Activated CD4-positive, alpha-beta memory T cell treated with anti-CD3 and anti-CD28 coated beads, Interleukin-2, amount 10 ng/mL, durations not matched to agents 7 days and 5 days (primary cell): ENCODE measurements at regions of chr5 and their contacts with region 1.

Region 1: GRCh38 chr5:78294248-78295034 is at the start of gene AP3B1:
- DNase-seq: peak; percentile 98
- H3K4me3 Mint-ChIP-seq: peak within 1 kb of the TSS; percentile 94
- H3K27ac Mint-ChIP-seq: peak within 1 kb of the TSS; percentile 96
- H3K4me1 Mint-ChIP-seq: peaks cover 38% of the 10 kb centered on the region
- H3K27me3 Mint-ChIP-seq: peaks cover 3% of the 10 kb centered on the region
- total RNA-seq, gene AP3B1: 40.3 to 42.7 TPM

Region 2: GRCh38 chr5:78283105-78283504 is 11.3 kb before region 1 on chr5:
- CTCF ChIA-PET with region 1: interaction called, 4 read pairs
- POLR2A ChIA-PET with region 1: interaction called, 18 read pairs
- DNase-seq: no peak
- H3K4me3 Mint-ChIP-seq: no peak overlapping the region
- H3K27ac Mint-ChIP-seq: no peak overlapping the region
- H3K4me1 Mint-ChIP-seq: peaks cover 32% of the 10 kb centered on the region
- H3K27me3 Mint-ChIP-seq: no peaks in the 10 kb centered on the region

Region 3: DNA sequence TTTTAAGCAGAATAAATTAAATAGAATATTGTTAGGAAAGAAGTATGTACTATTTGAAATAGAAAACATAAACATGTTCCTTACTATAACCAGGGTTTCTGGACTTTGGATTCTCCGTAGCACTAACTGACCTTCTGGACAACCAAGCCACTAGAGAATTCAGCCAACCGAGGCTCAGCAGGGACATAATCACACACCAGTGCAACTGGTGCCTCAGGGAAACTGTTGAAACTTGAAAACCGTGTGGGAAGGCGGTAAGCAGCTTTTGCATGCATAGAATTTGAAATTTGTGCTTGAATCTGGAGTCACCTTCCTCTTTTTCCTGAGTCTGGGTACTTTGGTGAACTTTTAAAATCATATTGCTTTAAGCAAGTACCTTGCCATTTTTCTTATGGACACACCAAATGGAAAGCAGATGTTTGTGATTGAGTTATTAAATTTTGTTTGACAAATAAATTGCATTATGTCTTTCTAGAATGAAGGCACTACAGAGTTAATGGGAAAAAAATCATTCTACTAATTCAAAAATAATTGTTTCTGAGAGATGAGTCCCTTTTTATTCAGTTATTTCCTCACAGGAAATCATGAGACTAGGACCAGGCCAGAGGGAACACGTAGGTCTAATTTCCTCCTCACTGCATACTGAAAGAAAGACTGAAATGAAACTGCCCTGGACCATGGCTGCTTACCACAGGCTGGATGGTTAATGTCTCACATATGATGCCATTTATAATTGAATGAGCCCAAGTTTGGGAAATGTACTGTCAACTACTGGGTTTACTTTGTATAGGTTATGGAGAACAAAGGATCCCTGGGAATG is 45.4 kb after region 1 on chr5:
- CTCF ChIA-PET with region 1: no interaction called
- POLR2A ChIA-PET with region 1: no interaction called
- DNase-seq: no peak
- H3K4me3 Mint-ChIP-seq: no peak overlapping the region
- H3K27ac Mint-ChIP-seq: no peak overlapping the region
- H3K4me1 Mint-ChIP-seq: no peaks in the 10 kb centered on the region
- H3K27me3 Mint-ChIP-seq: peaks cover 8% of the 10 kb centered on the region

Region 4: DNA sequence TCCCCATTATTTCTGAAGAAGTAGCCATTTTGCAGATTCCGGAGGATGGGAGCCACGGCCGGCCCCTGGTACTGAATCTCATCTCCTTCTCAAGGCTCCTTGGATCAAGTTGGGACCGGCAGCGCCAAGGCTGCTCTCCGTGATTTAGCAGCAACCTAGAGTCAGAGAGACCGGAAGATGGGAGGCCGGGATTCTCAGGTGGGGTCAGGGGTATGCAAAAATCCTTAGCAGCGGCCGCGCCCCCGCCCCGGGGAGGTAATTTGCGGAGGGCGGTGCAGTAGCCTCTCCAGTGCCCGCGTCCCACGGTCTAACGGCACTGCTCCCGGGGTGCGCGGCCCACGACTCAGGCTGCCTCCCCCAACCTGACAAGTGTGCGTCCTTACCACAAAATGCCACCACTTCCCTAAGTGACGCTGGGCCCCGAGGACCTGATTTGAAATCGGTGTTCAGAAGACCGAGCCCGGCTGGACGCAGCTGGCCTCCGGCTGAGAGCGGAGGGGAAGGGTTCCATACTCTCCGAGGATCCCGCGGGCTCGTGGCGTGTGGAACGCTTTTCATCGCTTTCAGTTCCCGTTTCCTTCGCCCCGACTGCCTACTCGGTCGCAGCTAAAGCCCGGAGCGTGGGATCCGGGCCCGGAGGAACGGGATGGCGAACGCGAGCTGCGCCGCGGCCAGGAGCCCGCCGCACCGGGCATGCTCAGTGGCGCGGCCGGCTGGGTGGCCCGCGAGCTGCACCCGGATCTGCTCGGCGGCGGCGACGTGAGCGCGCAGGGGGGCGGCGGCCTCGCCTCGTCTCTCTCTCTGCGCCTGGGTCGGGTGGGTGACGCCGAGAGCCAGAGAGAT is 65.6 kb after region 1 on chr5 and contains the start of gene SCAMP1:
- CTCF ChIA-PET with region 1: interaction called, 68 read pairs
- POLR2A ChIA-PET with region 1: interaction called, 170 read pairs
- DNase-seq: peak; percentile 93
- H3K4me3 Mint-ChIP-seq: peak within 1 kb of the TSS; percentile 96
- H3K27ac Mint-ChIP-seq: peak within 1 kb of the TSS; percentile 92
- H3K4me1 Mint-ChIP-seq: peaks cover 31% of the 10 kb centered on the region
- H3K27me3 Mint-ChIP-seq: no peaks in the 10 kb centered on the region
- total RNA-seq, gene SCAMP1: 22.0 to 22.3 TPM

Region 5: GRCh38 chr5:78387468-78388153 is 93.2 kb after region 1 on chr5:
- CTCF ChIA-PET with region 1: no interaction called
- POLR2A ChIA-PET with region 1: no interaction called
- DNase-seq: no peak
- H3K4me3 Mint-ChIP-seq: no peak overlapping the region
- H3K27ac Mint-ChIP-seq: no peak overlapping the region
- H3K4me1 Mint-ChIP-seq: peaks cover 11% of the 10 kb centered on the region
- H3K27me3 Mint-ChIP-seq: no peaks in the 10 kb centered on the region

Region 6: GRCh38 chr5:78497573-78498533 is 203.4 kb after region 1 on chr5:
- CTCF ChIA-PET with region 1: no interaction called
- POLR2A ChIA-PET with region 1: no interaction called
- DNase-seq: no peak
- H3K4me3 Mint-ChIP-seq: no peak overlapping the region
- H3K27ac Mint-ChIP-seq: no peak overlapping the region
- H3K4me1 Mint-ChIP-seq: no peaks in the 10 kb centered on the region
- H3K27me3 Mint-ChIP-seq: peaks cover 37% of the 10 kb centered on the region